ENCODE measurements at regions of chr19 and their contacts with region 1.

Region 1: DNA sequence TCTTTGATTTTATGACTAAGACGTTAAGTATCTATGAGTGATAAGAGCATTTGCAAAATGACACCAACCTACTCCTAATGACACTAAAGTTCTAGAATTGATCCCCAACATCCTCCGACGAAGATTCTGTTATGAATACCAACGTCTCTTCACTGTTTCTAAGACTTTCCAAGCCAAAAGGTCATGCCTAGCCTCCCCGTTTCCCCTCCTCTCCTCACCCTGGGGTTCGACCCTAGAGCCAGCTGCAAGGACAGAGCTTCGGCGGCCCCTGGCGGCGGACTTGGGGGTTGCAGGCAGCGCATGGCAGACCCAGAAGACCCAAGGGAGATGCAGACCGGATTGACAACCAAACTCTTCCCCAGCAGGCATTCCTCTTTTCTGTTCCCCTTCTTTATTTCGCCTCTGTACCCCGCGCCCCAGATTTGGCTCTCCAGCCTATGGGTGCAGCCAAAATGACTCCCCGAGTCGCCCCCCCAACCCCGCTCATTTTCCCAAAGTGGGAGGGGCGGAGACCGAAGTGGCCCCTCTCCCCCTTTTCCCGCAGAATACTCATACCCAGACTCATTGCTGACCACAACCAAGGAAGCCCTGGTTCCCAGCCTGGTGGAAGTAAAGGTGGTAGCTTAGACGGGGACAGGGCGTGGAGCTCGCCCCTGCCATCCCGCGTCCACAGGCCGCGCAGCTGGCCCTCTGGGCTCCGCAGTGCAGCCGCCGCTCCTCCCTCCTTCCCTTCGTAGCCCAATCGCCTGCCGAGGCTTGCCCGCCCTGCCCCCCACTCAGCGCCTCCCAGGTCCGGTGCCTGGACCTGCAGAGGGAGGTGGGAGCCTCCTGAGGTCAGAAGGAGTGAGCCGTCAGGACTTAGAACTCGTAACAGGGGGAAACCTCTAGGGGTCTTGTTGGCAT is 4.1 kb upstream of the EML2 start:
- DNase-seq: peak; percentile 78 to 97 (median 90)
- ATAC-seq: peak; percentile 44
- H3K4me3 ChIP-seq: no peak overlapping the region
- H3K4me3 Mint-ChIP-seq: peak overlapping the region; percentile 61 to 91 (median 80)
- H3K27ac ChIP-seq: peak overlapping the region; percentile 78
- H3K27ac Mint-ChIP-seq: peak overlapping the region; percentile 52 to 92 (median 85)
- H3K4me1 ChIP-seq: peaks cover 22 to 25% of the 10 kb centered on the region in 2 donors
- H3K4me1 Mint-ChIP-seq: peaks cover 31 to 54% (median 43%) of the 10 kb centered on the region in 7 donors
- H3K27me3 ChIP-seq: no peaks in the 10 kb centered on the region
- H3K27me3 Mint-ChIP-seq: peaks cover 0 to 6% (median 3%) of the 10 kb centered on the region in 5 donors

Region 2: GRCh38 chr19:45478454-45479238 is 164.6 kb before region 1 on chr19:
- CTCF ChIA-PET with region 1: interaction called, 6 read pairs
- POLR2A ChIA-PET with region 1: interaction called, 4 read pairs
- intact Hi-C with region 1: loop called in 1 of 2 experiments (anchors 1 kb)
- DNase-seq: peak; percentile 77 to 94 (median 91)
- ATAC-seq: peak; percentile 62
- H3K4me3 ChIP-seq: peak overlapping the region; percentile 78
- H3K4me3 Mint-ChIP-seq: peak overlapping the region; percentile 62 to 96 (median 79)
- H3K27ac ChIP-seq: peak overlapping the region; percentile 94
- H3K27ac Mint-ChIP-seq: peak overlapping the region; percentile 95 to 100 (median 99)
- H3K4me1 ChIP-seq: peaks cover 7 to 11% of the 10 kb centered on the region in 2 donors
- H3K4me1 Mint-ChIP-seq: peaks cover 23 to 43% (median 33%) of the 10 kb centered on the region in 7 donors
- H3K27me3 ChIP-seq: no peaks in the 10 kb centered on the region
- H3K27me3 Mint-ChIP-seq: peaks cover 0 to 38% (median 6%) of the 10 kb centered on the region in 5 donors

Region 3: GRCh38 chr19:45523642-45524256 is 119.5 kb before region 1 on chr19:
- CTCF ChIA-PET with region 1: interaction called, 11 read pairs
- POLR2A ChIA-PET with region 1: interaction called, 3 read pairs
- intact Hi-C with region 1: loop called (anchors 1 kb)
- DNase-seq: peak; percentile 54 to 85 (median 83)
- ATAC-seq: peak; percentile 100
- H3K4me3 ChIP-seq: no peak overlapping the region
- H3K4me3 Mint-ChIP-seq: no peak overlapping the region
- H3K27ac ChIP-seq: no peak overlapping the region
- H3K27ac Mint-ChIP-seq: peak overlapping the region in 8 of 9 donors; percentile 26 to 88 (median 65)
- H3K4me1 ChIP-seq: no peaks in the 10 kb centered on the region
- H3K4me1 Mint-ChIP-seq: peaks cover 11 to 24% (median 17%) of the 10 kb centered on the region in 7 donors
- H3K27me3 ChIP-seq: no peaks in the 10 kb centered on the region
- H3K27me3 Mint-ChIP-seq: no peaks in the 10 kb centered on the region

Region 4: GRCh38 chr19:45591004-45591637 is 52.2 kb before region 1 on chr19:
- CTCF ChIA-PET with region 1: interaction called, 4 read pairs
- POLR2A ChIA-PET with region 1: interaction called, 4 read pairs
- intact Hi-C with region 1: loop called in 1 of 2 experiments (anchors 1 kb)
- DNase-seq: peak in 3 of 9 donors; percentile 21 to 49 (median 26)
- ATAC-seq: peak; percentile 60
- H3K4me3 ChIP-seq: no peak overlapping the region
- H3K4me3 Mint-ChIP-seq: peak overlapping the region in 1 of 10 donors; percentile 45
- H3K27ac ChIP-seq: no peak overlapping the region
- H3K27ac Mint-ChIP-seq: no peak overlapping the region
- H3K4me1 ChIP-seq: no peaks in the 10 kb centered on the region
- H3K4me1 Mint-ChIP-seq: peaks cover 0 to 14% (median 4%) of the 10 kb centered on the region in 7 donors
- H3K27me3 ChIP-seq: no peaks in the 10 kb centered on the region
- H3K27me3 Mint-ChIP-seq: peaks cover 24 to 54% (median 43%) of the 10 kb centered on the region in 5 donors

Region 5: GRCh38 chr19:45670670-45671453 is 27.6 kb after region 1 on chr19:
- CTCF ChIA-PET with region 1: no interaction called
- POLR2A ChIA-PET with region 1: interaction called, 5 read pairs
- intact Hi-C with region 1: loop called in 1 of 2 experiments (anchors 2 kb)
- DNase-seq: peak in 4 of 9 donors; percentile 14 to 87 (median 31)
- ATAC-seq: peak; percentile 58
- H3K4me3 ChIP-seq: no peak overlapping the region
- H3K4me3 Mint-ChIP-seq: peak overlapping the region in 8 of 10 donors; percentile 39 to 96 (median 74)
- H3K27ac ChIP-seq: no peak overlapping the region
- H3K27ac Mint-ChIP-seq: peak overlapping the region in 1 of 9 donors; percentile 13
- H3K4me1 ChIP-seq: peaks cover 15 to 25% of the 10 kb centered on the region in 2 donors
- H3K4me1 Mint-ChIP-seq: peaks cover 30 to 39% (median 32%) of the 10 kb centered on the region in 7 donors
- H3K27me3 ChIP-seq: no peaks in the 10 kb centered on the region
- H3K27me3 Mint-ChIP-seq: peaks cover 0 to 22% (median 17%) of the 10 kb centered on the region in 5 donors